ENCODE measurements at regions of chr12 and their contacts with region 1.

Region 1: GRCh38 chr12:38138225-38139221 is 178.1 kb upstream of the ALG10B start:
- DNase-seq: peak in 39 of 42 donors; percentile 21 to 95 (median 81)

Region 2: DNA sequence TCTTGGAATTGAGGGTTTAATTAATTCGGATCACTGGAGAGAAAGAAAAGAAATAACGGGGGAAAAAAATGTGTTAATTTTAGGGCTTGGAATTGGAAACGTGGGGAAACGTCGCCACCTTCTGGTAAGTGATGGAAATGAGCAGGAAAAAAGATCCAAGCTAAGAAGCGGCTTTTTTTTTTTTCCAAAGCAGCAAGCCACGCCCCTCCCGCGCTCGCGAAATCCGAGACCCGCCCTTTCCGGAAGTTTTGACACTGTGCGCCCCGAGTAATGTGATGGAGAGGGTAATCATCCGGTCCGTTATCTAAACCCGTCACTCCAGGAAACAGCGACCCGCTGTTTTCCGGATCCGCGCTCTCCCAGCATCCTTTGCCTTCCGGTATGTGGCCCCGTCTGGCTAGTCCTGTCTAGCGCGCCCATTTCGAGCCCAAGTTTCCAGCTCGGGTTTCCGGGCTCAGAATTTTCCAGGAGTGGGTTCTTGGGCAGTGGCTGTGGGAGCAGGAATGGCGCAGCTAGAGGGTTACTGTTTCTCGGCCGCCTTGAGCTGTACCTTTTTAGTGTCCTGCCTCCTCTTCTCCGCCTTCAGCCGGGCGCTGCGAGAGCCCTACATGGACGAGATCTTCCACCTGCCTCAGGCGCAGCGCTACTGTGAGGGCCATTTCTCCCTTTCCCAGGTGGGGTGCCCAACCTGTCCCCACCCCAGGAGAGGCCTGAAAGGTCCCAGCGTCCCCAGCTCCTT is 178.0 kb after region 1 on chr12 and contains the start of gene ALG10B:
- intact Hi-C with region 1: loop called (anchors 2 kb)
- DNase-seq: peak; percentile 88 to 98 (median 94)

Measured in head of caudate nucleus (tissue), 42 donors.